ENCODE measurements at regions of chr7 and their contacts with region 1.

Region 1: GRCh38 chr7:4115941-4116610 is 566.0 kb upstream of the FOXK1 start:
- DNase-seq: no peak
- ATAC-seq: no peak
- H3K4me3 ChIP-seq: no peak overlapping the region
- H3K27ac ChIP-seq: no peak overlapping the region
- H3K4me1 ChIP-seq: no peaks in the 10 kb centered on the region
- CTCF ChIP-seq: no peak
- EP300 ChIP-seq: no peak
- POLR2A ChIP-seq: no peak
- RAD21 ChIP-seq: no peak

Region 2: GRCh38 chr7:4103352-4104091 is 12.6 kb before region 1 on chr7:
- CTCF ChIA-PET with region 1: interaction called, 14 read pairs
- POLR2A ChIA-PET with region 1: no interaction called
- DNase-seq: peak; percentile 36 to 59
- ATAC-seq: peak; percentile 70; a peak in 5 of 6 replicates
- H3K4me3 ChIP-seq: no peak overlapping the region
- H3K27ac ChIP-seq: no peak overlapping the region; a peak in 1 of 6 replicates
- H3K4me1 ChIP-seq: no peaks in the 10 kb centered on the region
- CTCF ChIP-seq: peak; percentile 52
- EP300 ChIP-seq: no peak
- POLR2A ChIP-seq: no peak
- RAD21 ChIP-seq: peak; percentile 20 to 25; a peak in 1 of 5 replicates

Measured in A549 (cell line).